Common myeloid progenitor, CD34-positive (primary cell): ENCODE measurements at regions of chr10 and their contacts with region 1.

Region 1: DNA sequence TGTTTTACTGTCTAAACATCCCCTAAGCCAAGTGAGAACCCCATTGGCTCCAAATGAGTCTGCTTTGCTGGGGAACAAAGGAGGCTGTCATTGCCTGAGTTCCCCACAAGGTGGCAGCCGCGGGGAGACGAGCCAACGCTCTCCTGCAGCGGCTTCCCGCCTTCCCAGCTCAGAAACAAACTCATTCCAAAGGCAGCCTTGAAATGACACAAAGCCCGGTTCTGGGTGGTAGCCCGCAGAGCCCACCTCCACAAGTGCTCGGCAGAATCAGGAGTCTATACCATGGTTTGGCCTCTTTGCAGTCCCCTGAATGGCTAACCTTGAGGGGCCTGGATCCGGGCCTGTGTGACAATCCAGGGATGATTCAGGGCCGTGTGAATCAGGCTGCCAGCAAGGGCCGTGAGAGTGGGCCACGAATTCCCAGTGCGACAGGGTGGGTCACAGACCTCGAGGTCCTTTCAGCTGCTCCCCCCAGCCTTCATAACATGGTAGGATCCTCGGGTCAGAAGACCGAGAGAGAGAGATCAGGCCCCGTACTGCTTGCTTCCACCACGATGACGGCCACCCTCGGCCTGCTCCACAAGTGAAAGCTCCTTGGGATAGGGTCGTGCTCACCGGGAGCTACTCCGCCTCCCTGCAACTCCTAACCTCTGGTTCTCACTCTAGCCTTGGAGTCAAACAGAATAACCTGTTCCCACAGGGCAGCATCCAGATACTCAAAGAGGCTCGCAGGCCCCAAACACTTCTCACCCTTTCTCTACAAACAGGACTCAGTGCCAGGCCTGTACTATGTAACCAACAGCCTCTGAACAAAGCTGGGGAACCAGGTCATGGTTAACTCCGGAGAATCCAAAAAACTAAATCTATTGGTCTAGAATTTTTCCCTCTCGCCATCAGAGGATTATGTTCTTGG is 79.6 kb downstream of the DLG5 start:
- DNase-seq: peak; percentile 40 to 62 (median 48)
- H3K4me3 ChIP-seq: no peak overlapping the region
- H3K27ac ChIP-seq: no peak overlapping the region
- H3K4me1 ChIP-seq: peaks cover 0 to 9% (median 4%) of the 10 kb centered on the region in 4 experiments
- H3K27me3 ChIP-seq: no peaks in the 10 kb centered on the region

Region 2: GRCh38 chr10:77810446-77811335 is 36.3 kb before region 1 on chr10:
- CTCF ChIA-PET with region 1: no interaction called
- POLR2A ChIA-PET with region 1: no interaction called
- DNase-seq: no peak
- H3K4me3 ChIP-seq: no peak overlapping the region
- H3K27ac ChIP-seq: no peak overlapping the region
- H3K4me1 ChIP-seq: no peaks in the 10 kb centered on the region
- H3K27me3 ChIP-seq: no peaks in the 10 kb centered on the region

Region 3: GRCh38 chr10:77974396-77975074 is 127.6 kb after region 1 on chr10:
- CTCF ChIA-PET with region 1: interaction called, 12 read pairs
- POLR2A ChIA-PET with region 1: no interaction called
- DNase-seq: peak; percentile 31 to 61 (median 54)
- H3K4me3 ChIP-seq: no peak overlapping the region
- H3K27ac ChIP-seq: no peak overlapping the region
- H3K4me1 ChIP-seq: peaks cover 0 to 11% (median 8%) of the 10 kb centered on the region in 4 experiments
- H3K27me3 ChIP-seq: no peaks in the 10 kb centered on the region